ENCODE measurements at regions of chrX and their contacts with region 1.

Region 1: GRCh38 chrX:53093748-53094583 is at the start of gene KANTR:
- DNase-seq: peak; percentile 87 to 92
- H3K4me3 ChIP-seq: peak within 1 kb of the TSS; percentile 54; the same call in 1 of the 2 replicates
- H3K27ac ChIP-seq: peak within 1 kb of the TSS; percentile 74
- H3K4me1 ChIP-seq: no peaks in the 10 kb centered on the region
- H3K27me3 ChIP-seq: no peaks in the 10 kb centered on the region
- CTCF ChIP-seq: no peak
- total RNA-seq, gene KANTR: 25.1 and 25.3 TPM in 2 replicates

Region 2: GRCh38 chrX:52261463-52262194 is 832.3 kb before region 1 on chrX:
- CTCF ChIA-PET with region 1: no interaction called
- POLR2A ChIA-PET with region 1: no interaction called
- intact Hi-C with region 1: loop called (anchors 1 kb)
- DNase-seq: peak; percentile 71 to 87
- H3K4me3 ChIP-seq: peak overlapping the region; percentile 58
- H3K27ac ChIP-seq: peak overlapping the region; percentile 58
- H3K4me1 ChIP-seq: 0 out of 2 replicates have a peak, but pooled peaks cover 4% of the 10 kb centered on the region
- H3K27me3 ChIP-seq: no peaks in the 10 kb centered on the region
- CTCF ChIP-seq: peak; percentile 97

Region 3: DNA sequence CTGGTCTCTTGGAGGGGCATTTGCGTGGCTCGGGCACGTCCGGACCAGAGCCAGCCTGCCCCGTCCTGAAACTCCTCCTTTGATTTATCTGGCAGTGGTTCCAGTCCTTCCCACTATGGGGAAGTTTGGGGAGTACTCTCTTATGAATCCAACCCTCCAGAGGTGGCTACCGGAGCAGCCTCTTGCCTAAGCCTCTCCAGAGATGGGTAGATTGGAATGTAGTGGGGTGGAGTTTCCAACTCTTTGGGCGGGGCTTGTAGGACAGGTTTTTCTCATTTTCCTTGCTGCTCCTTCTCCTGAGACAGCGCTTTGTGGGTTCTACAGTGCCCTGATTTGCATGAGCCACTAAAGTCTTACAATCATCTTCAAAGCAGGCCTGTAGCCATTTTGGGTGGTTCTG is 517.0 kb before region 1 on chrX:
- CTCF ChIA-PET with region 1: no interaction called
- POLR2A ChIA-PET with region 1: no interaction called
- intact Hi-C with region 1: loop called (anchors 2 kb)
- DNase-seq: no peak
- H3K4me3 ChIP-seq: no peak overlapping the region
- H3K27ac ChIP-seq: no peak overlapping the region
- H3K4me1 ChIP-seq: no peaks in the 10 kb centered on the region
- H3K27me3 ChIP-seq: peaks cover 36% of the 10 kb centered on the region
- CTCF ChIP-seq: no peak

Region 4: DNA sequence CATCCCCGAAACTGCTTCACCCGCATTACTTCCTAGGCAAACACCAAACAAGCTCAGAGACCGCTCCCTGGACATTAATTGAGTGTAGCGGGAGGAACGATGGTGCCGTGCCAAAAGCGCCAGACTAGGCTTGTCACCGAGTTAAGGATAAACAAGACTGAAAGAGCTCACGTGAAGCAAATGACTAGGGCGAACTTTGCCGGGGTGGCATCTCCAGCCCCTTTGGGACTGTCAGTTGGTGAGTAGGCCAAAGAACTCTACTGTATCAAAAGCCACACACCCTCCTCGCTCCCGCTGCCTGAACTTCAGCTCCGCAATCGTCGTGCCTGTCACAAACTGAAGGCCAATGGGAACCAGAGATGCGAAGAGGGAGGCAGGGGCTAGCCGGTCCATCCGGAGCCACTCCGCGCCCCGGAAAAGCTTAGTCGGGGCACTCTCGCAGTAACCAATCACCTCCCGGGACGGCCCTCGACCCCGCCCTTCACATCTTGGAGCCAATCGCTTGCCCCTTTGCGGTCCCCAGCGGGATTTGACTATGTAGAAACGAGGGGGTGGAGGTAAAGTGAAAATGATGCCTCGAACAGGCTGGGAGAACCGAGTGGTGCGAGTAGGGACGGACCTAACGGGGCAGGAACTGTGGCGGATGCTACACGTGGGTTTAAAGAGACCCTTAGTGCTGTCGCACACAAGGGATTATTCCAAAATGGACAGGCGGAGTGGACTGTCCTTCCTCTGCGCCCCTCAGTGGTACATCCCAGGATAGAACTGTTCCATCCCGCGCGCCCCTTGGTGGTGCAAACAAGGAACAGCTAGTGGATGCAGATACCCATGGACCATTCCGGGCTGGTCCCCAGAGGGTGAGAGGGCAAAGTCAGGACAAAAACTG is 98.6 kb before region 1 on chrX:
- CTCF ChIA-PET with region 1: no interaction called
- POLR2A ChIA-PET with region 1: interaction called, 3 read pairs
- intact Hi-C with region 1: loop called (anchors 1 kb)
- DNase-seq: peak; percentile 80 to 97
- H3K4me3 ChIP-seq: peak overlapping the region; percentile 57; the same call in 1 of the 2 replicates
- H3K27ac ChIP-seq: peak overlapping the region; percentile 66
- H3K4me1 ChIP-seq: no peaks in the 10 kb centered on the region
- H3K27me3 ChIP-seq: no peaks in the 10 kb centered on the region
- CTCF ChIP-seq: peak; percentile 59

Region 5: DNA sequence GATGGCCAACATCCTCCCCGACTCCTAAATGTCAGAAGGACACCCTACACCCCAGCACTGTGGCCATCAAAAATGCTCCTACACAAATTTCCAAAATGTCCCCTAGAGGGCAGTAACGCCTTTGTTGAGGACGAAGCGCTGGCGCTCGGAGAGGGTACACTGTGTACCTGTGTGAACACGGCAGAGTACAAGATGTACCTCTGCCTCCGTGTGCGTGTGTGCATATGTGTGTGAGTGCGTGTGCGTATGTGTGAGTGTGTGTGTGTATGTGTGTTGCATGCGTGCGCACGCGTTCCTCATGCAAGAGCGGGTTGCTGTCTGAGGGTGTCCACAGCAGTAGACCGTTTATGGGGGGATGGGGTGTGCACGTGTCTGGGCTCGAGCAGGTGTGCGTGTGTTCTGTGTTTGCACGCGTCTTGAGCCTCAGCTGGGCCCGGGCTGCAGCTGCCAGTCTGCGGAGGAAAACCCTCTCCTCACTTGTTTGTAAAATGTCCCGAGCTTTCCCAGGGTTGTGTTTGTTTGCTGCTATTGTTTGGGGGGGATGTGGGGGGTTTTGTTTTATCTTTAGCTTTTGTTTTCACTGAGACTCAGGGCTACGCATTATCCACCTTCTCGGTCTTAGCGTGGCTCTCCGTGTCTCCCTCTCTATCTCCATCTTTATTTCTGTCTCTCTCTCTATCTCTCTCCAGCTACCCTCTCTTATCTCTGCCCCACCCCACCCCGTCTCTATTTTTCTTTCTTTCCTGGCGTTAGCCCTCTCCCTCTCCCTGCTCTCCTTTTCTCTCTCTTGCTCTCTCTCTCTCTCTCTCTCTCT is 22.2 kb before region 1 on chrX:
- CTCF ChIA-PET with region 1: no interaction called
- POLR2A ChIA-PET with region 1: no interaction called
- intact Hi-C with region 1: loop called (anchors 1 kb)
- DNase-seq: peak in 1 of 2 experiments; percentile 64
- H3K4me3 ChIP-seq: peak overlapping the region; percentile 49; the same call in 1 of the 2 replicates
- H3K27ac ChIP-seq: no peak overlapping the region
- H3K4me1 ChIP-seq: no peaks in the 10 kb centered on the region
- H3K27me3 ChIP-seq: no peaks in the 10 kb centered on the region
- CTCF ChIP-seq: peak; percentile 60

Region 6: DNA sequence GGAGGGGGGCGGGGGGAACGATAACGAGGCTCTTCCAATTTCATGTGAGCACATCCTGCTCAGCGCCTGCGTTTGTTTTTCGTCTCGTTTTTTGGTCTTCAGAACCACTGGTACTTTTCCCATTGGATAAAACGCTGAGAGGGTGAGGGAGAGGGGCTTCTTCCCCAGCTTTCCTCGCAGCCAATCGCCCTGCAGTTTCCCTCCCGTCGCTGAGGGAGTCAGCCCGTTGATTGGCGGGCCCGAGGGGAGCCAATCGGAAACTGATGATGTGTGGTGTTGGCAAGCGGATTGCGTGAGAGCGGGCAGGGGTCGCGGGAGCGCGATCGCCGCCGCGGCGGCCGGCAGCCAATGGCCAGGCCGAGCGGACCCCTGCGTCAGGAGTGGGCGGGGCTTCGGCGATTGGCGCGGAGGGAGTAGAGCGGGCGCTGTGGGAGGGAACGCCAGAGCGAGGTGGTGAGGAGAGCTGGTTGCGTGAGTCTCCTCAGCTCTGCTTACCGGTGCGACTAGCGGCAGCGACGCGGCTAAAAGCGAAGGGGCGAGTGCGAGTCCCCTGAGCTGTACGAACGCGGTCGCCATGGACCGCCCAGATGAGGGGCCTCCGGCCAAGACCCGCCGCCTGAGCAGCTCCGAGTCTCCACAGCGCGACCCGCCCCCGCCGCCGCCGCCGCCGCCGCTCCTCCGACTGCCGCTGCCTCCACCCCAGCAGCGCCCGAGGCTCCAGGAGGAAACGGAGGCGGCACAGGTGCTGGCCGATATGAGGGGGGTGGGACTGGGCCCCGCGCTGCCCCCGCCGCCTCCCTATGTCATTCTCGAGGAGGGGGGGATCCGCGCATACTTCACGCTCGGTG is 11.8 kb before region 1 on chrX and contains the start of gene TSPYL2:
- CTCF ChIA-PET with region 1: interaction called, 14 read pairs
- POLR2A ChIA-PET with region 1: no interaction called
- intact Hi-C with region 1: loop called (anchors 1 kb)
- DNase-seq: peak; percentile 79 to 98
- H3K4me3 ChIP-seq: peak within 1 kb of the TSS; percentile 56
- H3K27ac ChIP-seq: 0 out of 2 replicates have a peak within 1 kb of the TSS, but pooled peaks have one; percentile 34
- H3K4me1 ChIP-seq: no peaks in the 10 kb centered on the region
- H3K27me3 ChIP-seq: no peaks in the 10 kb centered on the region
- CTCF ChIP-seq: no peak
- total RNA-seq, gene TSPYL2: 17.2 and 26.0 TPM in 2 replicates

Region 7: DNA sequence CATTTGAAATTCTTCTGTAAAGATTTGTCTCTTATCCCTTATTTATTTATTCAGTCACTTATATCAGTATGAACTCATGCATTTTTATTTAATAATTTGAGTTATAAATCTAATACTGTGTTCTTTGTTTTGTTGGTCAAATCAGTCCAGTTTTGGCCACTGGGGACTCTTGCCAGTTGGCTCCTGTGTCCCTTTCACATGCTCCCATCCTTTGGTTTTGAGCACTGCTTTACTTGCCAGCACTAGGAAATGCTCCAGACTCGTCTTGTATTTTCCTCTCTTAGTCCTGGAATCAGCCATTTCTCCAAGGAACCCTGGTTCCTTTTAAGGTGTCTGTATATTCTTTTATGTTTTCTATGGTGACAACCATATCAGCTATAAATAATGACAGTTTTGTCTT is 28.0 kb after region 1 on chrX:
- CTCF ChIA-PET with region 1: no interaction called
- POLR2A ChIA-PET with region 1: no interaction called
- intact Hi-C with region 1: no loop called
- DNase-seq: no peak
- H3K4me3 ChIP-seq: no peak overlapping the region
- H3K27ac ChIP-seq: no peak overlapping the region
- H3K4me1 ChIP-seq: no peaks in the 10 kb centered on the region
- H3K27me3 ChIP-seq: no peaks in the 10 kb centered on the region
- CTCF ChIP-seq: no peak

Region 8: GRCh38 chrX:53133400-53133799 is 39.4 kb after region 1 on chrX:
- CTCF ChIA-PET with region 1: no interaction called
- POLR2A ChIA-PET with region 1: no interaction called
- intact Hi-C with region 1: no loop called
- DNase-seq: no peak
- H3K4me3 ChIP-seq: no peak overlapping the region
- H3K27ac ChIP-seq: no peak overlapping the region
- H3K4me1 ChIP-seq: no peaks in the 10 kb centered on the region
- H3K27me3 ChIP-seq: no peaks in the 10 kb centered on the region
- CTCF ChIP-seq: no peak

Region 9: DNA sequence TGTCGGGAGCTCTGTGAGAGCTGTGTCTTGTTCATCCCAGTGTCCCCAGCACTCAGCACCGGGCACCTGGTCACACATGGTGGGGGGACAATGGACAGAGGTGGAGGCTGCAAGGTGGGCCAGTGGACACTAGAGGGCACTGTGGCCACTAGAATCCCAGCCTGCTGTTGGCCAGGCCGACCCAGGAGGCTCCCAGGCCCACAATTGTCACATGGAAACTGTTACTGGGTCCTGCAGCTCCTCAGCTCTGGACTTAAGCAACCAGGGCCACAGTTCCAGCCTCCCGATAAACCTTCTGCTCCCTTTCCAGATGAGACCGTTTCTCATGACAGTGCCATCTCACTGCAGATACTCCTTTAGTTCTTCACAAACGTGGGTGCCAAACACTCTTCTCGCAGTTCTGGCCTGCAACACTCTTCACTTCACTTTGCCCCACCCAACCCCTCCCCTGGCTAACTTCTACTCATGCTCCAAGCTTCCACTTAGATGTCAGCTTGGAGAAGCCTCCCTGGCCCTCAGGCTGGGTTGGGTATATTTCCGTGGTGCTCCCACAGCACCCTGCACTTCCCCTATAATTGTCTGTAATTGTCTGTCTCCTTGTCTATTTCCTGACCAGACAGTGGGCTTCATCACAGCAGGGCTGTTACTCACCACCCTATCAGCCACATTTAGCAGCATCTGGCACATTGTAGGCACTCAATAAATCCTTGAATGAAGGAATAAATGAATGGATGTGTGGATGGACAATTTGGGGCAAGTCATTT is 190.9 kb after region 1 on chrX:
- CTCF ChIA-PET with region 1: no interaction called
- POLR2A ChIA-PET with region 1: no interaction called
- intact Hi-C with region 1: loop called (anchors 5 kb)
- DNase-seq: peak in 1 of 2 experiments; percentile 62
- H3K4me3 ChIP-seq: no peak overlapping the region
- H3K27ac ChIP-seq: no peak overlapping the region
- H3K4me1 ChIP-seq: peaks cover 10% of the 10 kb centered on the region; the same call in 1 of the 2 replicates
- H3K27me3 ChIP-seq: no peaks in the 10 kb centered on the region
- CTCF ChIP-seq: peak; percentile 69